Right cardiac atrium (tissue), 5 donors: ENCODE measurements at regions of chr3 and their contacts with region 1.

Region 1: DNA sequence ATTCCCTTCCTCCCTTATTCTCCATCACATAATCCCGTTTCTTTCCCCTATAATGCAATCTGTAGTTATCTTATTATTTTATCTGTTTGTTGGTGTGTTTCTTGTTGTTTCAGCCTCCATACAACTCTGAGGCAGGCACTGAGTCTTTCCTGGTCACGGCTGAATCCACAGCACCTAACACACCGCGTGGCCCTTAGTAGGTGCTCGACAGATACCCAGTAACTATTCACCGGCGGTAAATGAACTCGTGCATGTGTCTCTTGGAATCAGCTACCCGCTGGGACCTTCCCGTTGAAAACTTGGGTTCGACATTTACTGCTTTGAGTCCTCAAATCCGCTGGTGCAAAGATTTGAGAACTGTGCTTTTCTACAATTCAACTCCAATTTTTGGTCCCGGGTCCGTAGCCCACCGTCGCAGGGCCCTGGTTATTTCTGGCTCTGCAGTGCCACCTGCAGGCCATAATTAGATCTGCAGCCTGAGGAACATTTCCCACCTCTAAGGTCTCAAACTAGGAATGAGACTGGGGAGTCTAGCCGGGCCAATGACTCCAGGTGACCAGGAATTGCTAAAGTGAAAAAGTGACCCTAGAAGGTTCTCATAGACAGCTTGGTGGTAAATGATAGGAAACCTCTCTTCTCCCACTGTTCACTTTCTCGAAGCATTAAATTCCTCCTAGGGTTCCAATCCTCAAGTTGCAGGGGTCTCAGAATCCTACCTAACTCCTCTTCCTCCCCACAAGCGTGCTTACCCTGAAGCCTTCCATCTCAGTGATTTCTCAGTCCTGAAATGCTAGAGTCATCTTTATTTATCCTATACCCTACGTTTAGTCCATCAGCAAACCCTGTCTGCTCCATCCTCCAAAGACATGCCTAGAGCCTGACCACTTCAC is 40.0 kb upstream of the TRH start:
- DNase-seq: peak in 1 of 3 donors; percentile 55
- ATAC-seq: peak; percentile 27 to 64
- H3K4me3 ChIP-seq: peak overlapping the region; percentile 40
- H3K27ac ChIP-seq: no peak overlapping the region
- H3K4me1 ChIP-seq: no peaks in the 10 kb centered on the region
- H3K27me3 ChIP-seq: no peaks in the 10 kb centered on the region

Region 2: DNA sequence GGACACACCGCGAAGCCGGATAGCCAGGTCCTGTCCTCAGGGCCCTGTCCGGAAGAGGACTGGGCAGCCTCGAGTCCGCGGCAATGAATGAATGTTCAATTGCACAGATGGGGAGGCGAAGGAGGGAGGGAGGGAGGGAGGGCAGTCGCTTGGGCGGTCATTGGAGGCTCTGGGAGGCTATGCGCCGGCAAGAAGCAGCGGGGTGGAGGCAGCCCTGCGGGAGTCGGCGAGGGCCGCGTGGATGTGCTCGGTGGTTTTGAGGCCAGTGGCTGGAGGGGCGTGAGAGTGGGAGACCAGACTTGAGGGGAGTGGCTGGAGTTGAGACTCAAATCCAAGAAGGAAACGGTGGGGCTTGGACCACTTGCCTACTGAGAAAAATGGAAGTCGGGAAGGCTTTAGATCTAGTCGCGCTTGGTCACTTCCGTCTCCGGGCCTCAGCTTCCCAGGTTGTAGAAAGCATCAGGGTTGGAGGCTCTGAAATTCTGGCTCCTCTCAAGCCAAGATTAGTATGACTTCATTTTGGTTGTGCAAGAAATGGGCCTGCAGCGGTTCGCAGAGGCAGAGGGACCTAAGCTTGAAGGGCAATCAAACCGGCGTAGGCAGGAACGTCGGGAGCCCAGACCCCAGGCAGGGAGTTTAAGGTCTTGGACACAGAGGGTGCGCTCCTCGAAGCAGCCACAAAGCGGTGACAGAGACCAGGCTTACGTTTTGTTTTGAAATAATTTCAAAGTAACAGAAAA is 306.9 kb before region 1 on chr3:
- intact Hi-C with region 1: loop called in 3 of 4 experiments (anchors 5 kb)
- DNase-seq: peak; percentile 82 to 88 (median 88)
- ATAC-seq: peak; percentile 39 to 47
- H3K4me3 ChIP-seq: peak overlapping the region; percentile 48
- H3K27ac ChIP-seq: peak overlapping the region; percentile 97
- H3K4me1 ChIP-seq: peaks cover 20% of the 10 kb centered on the region
- H3K27me3 ChIP-seq: no peaks in the 10 kb centered on the region

Region 3: DNA sequence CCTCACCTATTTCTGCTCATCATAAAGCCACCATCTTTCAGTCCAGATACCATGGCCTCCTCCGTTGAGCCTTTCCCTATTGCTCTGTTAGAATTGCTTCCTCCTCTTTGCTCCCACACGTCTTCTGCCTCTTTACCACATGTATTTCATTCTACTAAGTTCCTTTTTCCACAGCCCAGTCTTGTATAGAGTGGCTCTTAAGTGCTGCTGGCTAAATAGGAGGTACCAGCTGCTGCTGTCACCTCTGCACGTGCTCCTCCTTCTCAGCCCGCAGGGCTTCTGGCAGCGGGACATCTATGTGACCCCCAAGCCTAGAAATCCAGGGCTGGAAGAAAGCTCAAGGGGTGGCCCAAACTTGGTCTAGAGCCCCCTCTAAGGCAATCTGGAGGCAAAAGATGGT is 289.2 kb before region 1 on chr3:
- intact Hi-C with region 1: loop called in 2 of 4 experiments (anchors 5 to 10 kb)
- DNase-seq: no peak
- ATAC-seq: peak in 1 of 2 donors; percentile 29
- H3K4me3 ChIP-seq: no peak overlapping the region
- H3K27ac ChIP-seq: no peak overlapping the region
- H3K4me1 ChIP-seq: no peaks in the 10 kb centered on the region
- H3K27me3 ChIP-seq: no peaks in the 10 kb centered on the region

Region 4: DNA sequence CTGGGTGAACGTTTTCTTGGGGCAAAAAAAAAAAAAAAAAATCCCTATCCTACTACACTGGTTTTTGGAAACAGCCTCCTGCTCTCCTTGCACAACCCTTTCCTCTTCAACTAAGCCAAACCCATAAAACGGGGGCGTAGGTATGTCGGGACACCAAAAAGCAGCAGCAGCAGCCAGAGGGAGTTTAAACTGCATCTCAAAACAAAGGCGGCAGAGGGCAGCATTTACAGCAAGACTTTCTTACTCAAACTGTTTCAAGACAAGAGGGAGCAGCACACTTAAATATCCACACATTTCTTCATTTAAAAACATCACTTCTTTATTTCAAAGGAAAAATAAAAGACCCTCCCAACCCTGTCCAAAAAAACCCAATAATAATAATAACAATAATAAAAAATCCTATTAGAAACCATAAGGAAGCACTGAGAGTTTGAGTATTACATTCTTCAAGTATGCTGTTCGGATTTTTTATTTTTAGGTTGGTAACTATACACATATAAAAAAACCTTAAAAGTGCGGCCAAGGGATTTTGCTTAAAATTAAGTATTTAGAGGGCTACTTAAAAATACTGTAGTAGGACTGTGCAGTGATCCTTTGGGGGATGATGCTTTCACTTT is 284.1 kb before region 1 on chr3:
- intact Hi-C with region 1: loop called in 2 of 4 experiments (anchors 5 to 10 kb)
- DNase-seq: peak; percentile 67 to 78 (median 69)
- ATAC-seq: peak; percentile 65 to 76
- H3K4me3 ChIP-seq: no peak overlapping the region
- H3K27ac ChIP-seq: no peak overlapping the region
- H3K4me1 ChIP-seq: no peaks in the 10 kb centered on the region
- H3K27me3 ChIP-seq: no peaks in the 10 kb centered on the region

Region 5: GRCh38 chr3:129723558-129724324 is 210.7 kb before region 1 on chr3:
- intact Hi-C with region 1: no loop called
- DNase-seq: peak in 2 of 3 donors; percentile 56 to 74
- ATAC-seq: peak; percentile 94 to 95
- H3K4me3 ChIP-seq: peak overlapping the region; percentile 53
- H3K27ac ChIP-seq: peak overlapping the region; percentile 74
- H3K4me1 ChIP-seq: peaks cover 5% of the 10 kb centered on the region
- H3K27me3 ChIP-seq: no peaks in the 10 kb centered on the region